ENCODE measurements at regions of chr7 and their contacts with region 1.

Region 1: GRCh38 chr7:91940572-91941341 is at the start of gene AKAP9:
- DNase-seq: peak; percentile 94
- ATAC-seq: peak; percentile 93
- H3K4me3 Mint-ChIP-seq: peak within 1 kb of the TSS; percentile 80
- H3K27ac Mint-ChIP-seq: peak within 1 kb of the TSS; percentile 95
- H3K4me1 Mint-ChIP-seq: peaks cover 32% of the 10 kb centered on the region
- H3K27me3 Mint-ChIP-seq: no peaks in the 10 kb centered on the region
- CTCF ChIP-seq: no peak
- total RNA-seq, gene AKAP9: 24.8 to 28.4 TPM

Region 2: GRCh38 chr7:91759215-91759871 is 181.4 kb before region 1 on chr7:
- CTCF ChIA-PET with region 1: no interaction called
- POLR2A ChIA-PET with region 1: no interaction called
- intact Hi-C with region 1: no loop called
- DNase-seq: no peak
- ATAC-seq: no peak
- H3K4me3 Mint-ChIP-seq: no peak overlapping the region
- H3K27ac Mint-ChIP-seq: no peak overlapping the region
- H3K4me1 Mint-ChIP-seq: no peaks in the 10 kb centered on the region
- H3K27me3 Mint-ChIP-seq: no peaks in the 10 kb centered on the region
- CTCF ChIP-seq: no peak

Region 3: GRCh38 chr7:91880413-91881241 is 60.1 kb before region 1 on chr7 and contains the start of gene MTERF1:
- CTCF ChIA-PET with region 1: interaction called, 19 read pairs
- POLR2A ChIA-PET with region 1: interaction called, 6 read pairs
- intact Hi-C with region 1: no loop called
- DNase-seq: peak; percentile 97
- ATAC-seq: peak; percentile 96
- H3K4me3 Mint-ChIP-seq: peak within 1 kb of the TSS; percentile 88
- H3K27ac Mint-ChIP-seq: peak within 1 kb of the TSS; percentile 98
- H3K4me1 Mint-ChIP-seq: peaks cover 29% of the 10 kb centered on the region
- H3K27me3 Mint-ChIP-seq: no peaks in the 10 kb centered on the region
- CTCF ChIP-seq: peak; percentile 94
- total RNA-seq, gene MTERF1: 15.9 to 16.9 TPM

Region 4: DNA sequence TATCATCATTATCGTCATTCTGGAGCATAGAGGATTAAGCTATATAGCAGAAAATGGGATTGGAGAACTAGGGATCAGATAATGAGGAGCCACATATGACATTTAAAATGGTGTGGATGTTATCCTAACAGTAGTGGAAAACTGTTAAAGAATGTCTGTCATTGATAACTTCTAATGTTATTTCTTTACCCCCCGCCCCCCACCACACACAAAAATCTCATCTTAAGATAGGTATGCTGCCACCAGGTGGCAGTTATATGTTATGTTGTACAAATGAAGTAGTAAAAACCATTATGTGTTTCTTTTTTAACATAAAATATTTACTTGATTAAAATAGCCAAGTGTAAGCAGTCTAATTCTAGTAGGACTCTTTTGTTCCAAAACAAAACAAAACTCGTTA is 12.9 kb after region 1 on chr7:
- CTCF ChIA-PET with region 1: interaction called, 17 read pairs
- POLR2A ChIA-PET with region 1: interaction called, 7 read pairs
- intact Hi-C with region 1: no loop called
- DNase-seq: peak; percentile 20
- ATAC-seq: no peak
- H3K4me3 Mint-ChIP-seq: no peak overlapping the region
- H3K27ac Mint-ChIP-seq: no peak overlapping the region
- H3K4me1 Mint-ChIP-seq: peaks cover 27% of the 10 kb centered on the region
- H3K27me3 Mint-ChIP-seq: no peaks in the 10 kb centered on the region
- CTCF ChIP-seq: no peak

Region 5: GRCh38 chr7:92002720-92003119 is 62.0 kb after region 1 on chr7:
- CTCF ChIA-PET with region 1: no interaction called
- POLR2A ChIA-PET with region 1: no interaction called
- intact Hi-C with region 1: no loop called
- DNase-seq: no peak
- ATAC-seq: no peak
- H3K4me3 Mint-ChIP-seq: no peak overlapping the region
- H3K27ac Mint-ChIP-seq: no peak overlapping the region
- H3K4me1 Mint-ChIP-seq: no peaks in the 10 kb centered on the region
- H3K27me3 Mint-ChIP-seq: no peaks in the 10 kb centered on the region
- CTCF ChIP-seq: no peak

Measured in activated CD8-positive, alpha-beta T cell treated with anti-CD3 and anti-CD28 coated beads for 36 hours (primary cell).